PC-3 (cell line): ENCODE measurements at regions of chr9 and their contacts with region 1.

Region 1: DNA sequence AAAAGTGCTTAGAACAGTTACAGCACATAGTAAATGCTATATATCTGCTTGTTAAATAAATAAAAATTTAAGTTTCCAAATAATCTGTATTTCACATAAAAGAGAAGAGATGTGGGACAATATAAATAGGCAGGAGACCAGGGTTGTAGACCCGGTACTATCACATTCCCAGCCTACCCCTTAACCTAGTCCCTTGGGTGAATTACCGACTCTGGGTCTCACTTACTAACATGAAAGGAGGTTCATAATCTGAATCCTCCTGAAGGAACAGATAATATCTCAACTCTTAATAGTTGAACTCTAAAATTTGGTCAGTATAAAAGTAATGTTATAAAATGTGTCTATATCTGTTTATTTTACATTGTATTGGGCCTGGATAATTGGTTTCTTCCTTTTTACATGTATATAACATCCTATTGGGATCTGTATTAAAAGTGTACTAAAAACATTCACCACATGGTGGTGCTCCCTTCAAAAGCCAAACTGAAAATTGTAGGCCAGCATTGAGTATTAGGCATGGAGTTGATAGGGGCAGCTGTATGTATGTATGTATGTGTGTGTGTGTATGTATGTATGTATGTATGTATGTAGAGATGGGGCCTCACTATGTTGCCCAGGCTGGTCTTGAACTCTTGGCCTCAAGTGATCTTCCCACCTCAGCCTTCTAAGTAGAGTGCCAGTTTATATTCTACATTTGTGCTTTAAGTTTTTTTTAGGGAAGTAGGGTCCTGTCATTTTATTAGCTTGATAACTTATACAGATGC is 64.2 kb upstream of the ABL1 start:
- DNase-seq: peak; percentile 72
- ATAC-seq: peak; percentile 81
- H3K4me3 ChIP-seq: no peak overlapping the region
- H3K27ac ChIP-seq: no peak overlapping the region
- H3K4me1 ChIP-seq: no peaks in the 10 kb centered on the region; the same call in 1 of the 2 replicates
- H3K27me3 ChIP-seq: no peaks in the 10 kb centered on the region
- CTCF ChIP-seq: peak; percentile 62

Region 2: DNA sequence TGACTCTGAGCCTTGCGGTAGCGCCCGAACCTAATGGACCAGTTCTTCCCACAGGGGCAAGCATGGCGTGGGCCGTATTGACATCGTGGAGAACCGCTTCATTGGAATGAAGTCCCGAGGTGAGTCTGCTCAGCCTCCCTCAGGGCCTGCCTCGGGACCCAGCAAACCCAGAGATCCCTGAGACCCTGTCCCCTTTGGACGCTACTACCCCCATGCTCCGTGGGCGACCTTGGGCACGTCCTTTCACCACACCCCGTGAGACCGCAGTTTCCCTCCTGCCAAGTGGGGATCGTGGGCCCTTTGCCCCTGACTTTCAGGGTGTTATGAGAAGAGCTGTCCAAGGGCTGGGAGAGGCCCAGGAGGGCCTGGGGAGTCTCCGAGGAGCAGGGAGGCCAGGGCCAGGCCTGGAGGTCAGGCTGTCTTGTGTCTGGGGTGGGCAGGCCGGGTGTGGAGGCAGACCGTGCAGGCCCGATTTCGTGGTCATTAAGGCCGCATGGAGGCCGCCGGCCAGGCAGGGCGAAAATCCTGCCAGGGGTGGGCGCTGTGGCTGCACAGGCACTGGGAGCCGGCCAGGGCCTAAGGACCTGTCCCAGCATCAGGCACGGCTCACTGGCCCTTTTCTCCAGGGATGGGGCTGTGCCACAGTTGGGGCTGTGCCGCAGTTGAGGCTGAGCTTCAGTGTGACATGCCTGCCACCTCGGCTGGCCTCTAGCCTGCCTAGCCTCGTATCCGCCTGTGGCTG is 290.4 kb before region 1 on chr9:
- CTCF ChIA-PET with region 1: no interaction called
- POLR2A ChIA-PET with region 1: no interaction called
- intact Hi-C with region 1: no loop called
- DNase-seq: no peak
- ATAC-seq: no peak
- H3K4me3 ChIP-seq: no peak overlapping the region
- H3K27ac ChIP-seq: no peak overlapping the region
- H3K4me1 ChIP-seq: no peaks in the 10 kb centered on the region
- H3K27me3 ChIP-seq: no peaks in the 10 kb centered on the region
- CTCF ChIP-seq: peak; percentile 32; the same call in 1 of the 2 replicates

Region 3: DNA sequence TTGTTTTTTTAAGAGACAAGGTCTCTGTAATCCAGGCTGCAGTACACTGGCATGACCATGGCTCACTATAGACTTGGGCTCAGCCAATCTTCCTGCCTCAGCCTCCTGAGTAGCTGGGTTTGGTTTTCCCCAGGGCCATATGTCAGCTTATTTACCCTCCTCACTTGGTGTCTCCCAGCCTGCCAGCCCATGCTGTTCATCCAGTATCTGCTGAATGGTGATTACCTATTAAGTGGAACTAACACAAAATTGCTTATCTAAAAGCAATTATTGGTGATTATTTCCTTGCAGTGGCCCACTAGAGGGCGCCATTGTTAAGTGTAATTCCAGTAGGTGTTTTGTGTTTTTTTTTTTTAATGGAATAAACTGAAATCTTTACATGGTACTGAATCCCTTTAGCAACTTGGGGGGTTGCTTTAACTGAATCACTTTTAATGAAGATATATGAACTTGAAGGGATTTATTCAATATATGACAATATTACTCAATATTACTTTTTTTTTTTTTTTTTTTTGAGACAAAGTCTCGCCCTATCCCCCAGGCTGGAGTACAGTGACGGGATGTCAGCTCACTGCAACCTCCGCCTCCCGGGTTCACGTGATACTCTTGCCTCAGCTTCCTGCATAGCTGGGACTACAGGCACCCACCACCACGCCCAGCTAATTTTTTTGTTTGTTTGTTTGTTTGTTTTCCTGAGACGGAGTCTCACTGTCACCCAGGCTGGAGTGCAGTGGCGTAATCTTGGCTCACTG is 63.5 kb before region 1 on chr9:
- CTCF ChIA-PET with region 1: interaction called, 3 read pairs
- POLR2A ChIA-PET with region 1: no interaction called
- intact Hi-C with region 1: loop called (anchors 2 kb)
- DNase-seq: peak; percentile 63
- ATAC-seq: peak; percentile 70
- H3K4me3 ChIP-seq: no peak overlapping the region
- H3K27ac ChIP-seq: no peak overlapping the region
- H3K4me1 ChIP-seq: no peaks in the 10 kb centered on the region
- H3K27me3 ChIP-seq: no peaks in the 10 kb centered on the region
- CTCF ChIP-seq: peak; percentile 87

Region 4: DNA sequence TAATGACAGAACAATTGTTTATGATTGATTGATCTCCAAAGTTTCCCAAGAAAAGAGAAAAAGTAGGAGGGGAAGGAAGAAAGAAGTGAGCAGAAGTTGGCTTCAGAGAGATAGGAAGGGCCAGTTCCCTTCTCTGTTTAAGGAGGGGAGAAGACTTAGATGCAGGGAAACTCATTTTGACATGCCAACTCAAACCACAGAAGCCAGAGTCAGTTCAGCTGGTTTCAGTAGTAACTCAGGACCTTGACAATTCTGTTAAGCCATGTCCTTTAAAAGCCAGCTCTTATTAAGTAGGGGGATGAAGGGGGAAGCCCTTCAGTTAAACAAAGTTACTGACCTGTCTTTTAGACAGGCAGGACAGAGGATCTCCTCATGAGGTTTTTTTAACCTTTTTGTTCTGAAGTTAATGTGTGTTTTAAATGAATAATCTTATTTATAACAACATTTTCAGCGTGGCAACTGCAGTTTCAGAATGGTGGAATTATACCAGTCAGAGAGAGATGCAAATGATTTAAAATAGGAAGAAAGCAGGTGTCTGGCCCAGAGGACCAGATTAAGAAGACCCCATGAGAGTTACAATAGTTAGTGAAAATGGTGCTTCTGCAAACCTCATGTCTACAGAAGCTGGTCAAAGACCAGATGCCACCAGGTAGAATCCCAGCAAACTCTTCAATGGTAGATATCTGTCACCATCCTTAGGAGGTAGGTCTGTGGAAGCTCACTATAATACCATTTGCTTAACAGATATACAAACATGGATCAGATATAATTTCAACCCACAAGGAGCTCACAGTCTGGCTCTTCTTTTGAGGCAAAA is 34.9 kb after region 1 on chr9:
- CTCF ChIA-PET with region 1: no interaction called
- POLR2A ChIA-PET with region 1: no interaction called
- intact Hi-C with region 1: no loop called
- DNase-seq: no peak
- ATAC-seq: no peak
- H3K4me3 ChIP-seq: no peak overlapping the region
- H3K27ac ChIP-seq: no peak overlapping the region
- H3K4me1 ChIP-seq: no peaks in the 10 kb centered on the region
- H3K27me3 ChIP-seq: no peaks in the 10 kb centered on the region
- CTCF ChIP-seq: no peak

Region 5: DNA sequence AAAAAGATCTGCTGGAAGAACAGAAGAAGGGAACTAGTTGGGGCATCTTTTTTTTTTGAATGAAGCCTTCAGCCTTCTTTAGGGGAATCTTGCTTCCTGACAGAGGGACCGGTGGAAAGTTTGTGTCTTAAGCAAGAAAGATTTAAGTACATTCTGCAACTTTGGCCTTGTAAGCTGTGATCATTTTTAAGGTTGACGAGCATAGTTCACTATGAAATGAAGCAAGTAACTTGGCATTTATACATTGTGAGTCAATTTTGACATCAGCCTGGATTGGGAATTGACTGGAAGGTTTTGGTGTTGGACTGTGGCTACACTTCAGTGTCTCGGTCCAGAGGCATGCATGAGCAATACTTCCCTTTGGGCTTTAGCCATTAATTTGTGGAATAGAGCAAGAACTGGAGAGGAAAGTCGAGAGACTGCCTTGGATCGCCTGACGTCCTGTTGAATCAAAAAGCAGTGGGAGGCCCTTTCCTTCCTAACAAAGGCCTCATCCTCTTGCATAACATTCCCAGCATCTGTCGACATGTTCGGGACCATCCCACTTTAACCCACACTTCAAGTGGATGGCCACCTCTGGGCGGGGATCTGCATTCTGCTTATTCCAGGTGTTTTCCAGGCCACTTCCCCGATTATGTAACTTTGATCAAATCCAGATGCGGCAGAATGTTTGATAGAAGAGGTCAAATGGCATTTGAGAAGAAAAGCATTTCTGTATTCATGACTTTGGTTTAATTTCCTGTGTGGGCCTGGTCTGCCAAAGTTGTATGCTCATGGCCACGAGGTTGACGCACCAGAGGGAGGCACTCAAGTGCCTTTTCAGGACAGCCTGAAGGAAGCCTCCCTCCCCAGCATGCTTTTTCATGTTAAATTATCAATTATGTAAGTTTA is 76.7 kb after region 1 on chr9:
- CTCF ChIA-PET with region 1: no interaction called
- POLR2A ChIA-PET with region 1: interaction called, 5 read pairs
- intact Hi-C with region 1: loop called (anchors 1 kb)
- DNase-seq: peak; percentile 91
- ATAC-seq: peak; percentile 70
- H3K4me3 ChIP-seq: peak overlapping the region; percentile 57; the same call in 1 of the 2 replicates
- H3K27ac ChIP-seq: peak overlapping the region; percentile 92
- H3K4me1 ChIP-seq: peaks cover 39% of the 10 kb centered on the region
- H3K27me3 ChIP-seq: no peaks in the 10 kb centered on the region
- CTCF ChIP-seq: 0 out of 2 replicates have a peak, but pooled peaks have one; percentile 24

Region 6: GRCh38 chr9:130857864-130858738 is 87.2 kb after region 1 on chr9:
- CTCF ChIA-PET with region 1: no interaction called
- POLR2A ChIA-PET with region 1: no interaction called
- intact Hi-C with region 1: loop called (anchors 1 kb)
- DNase-seq: peak; percentile 15
- ATAC-seq: no peak
- H3K4me3 ChIP-seq: no peak overlapping the region
- H3K27ac ChIP-seq: no peak overlapping the region
- H3K4me1 ChIP-seq: no peaks in the 10 kb centered on the region; the same call in 1 of the 2 replicates
- H3K27me3 ChIP-seq: no peaks in the 10 kb centered on the region
- CTCF ChIP-seq: no peak